PC-9 (cell line): ENCODE measurements at regions of chr2 and their contacts with region 1.

Region 1: GRCh38 chr2:100799686-100800085 is 20.3 kb upstream of the NPAS2 start:
- DNase-seq: no peak
- H3K4me3 ChIP-seq: no peak overlapping the region
- H3K27ac ChIP-seq: no peak overlapping the region
- H3K4me1 ChIP-seq: peaks cover 34% of the 10 kb centered on the region
- H3K27me3 ChIP-seq: no peaks in the 10 kb centered on the region
- CTCF ChIP-seq: no peak

Region 2: GRCh38 chr2:100752628-100753333 is 46.9 kb before region 1 on chr2:
- CTCF ChIA-PET with region 1: no interaction called
- POLR2A ChIA-PET with region 1: interaction called, 12 read pairs
- intact Hi-C with region 1: no loop called
- DNase-seq: peak in 1 of 2 experiments; percentile 92
- H3K4me3 ChIP-seq: no peak overlapping the region
- H3K27ac ChIP-seq: peak overlapping the region; percentile 72
- H3K4me1 ChIP-seq: peaks cover 53% of the 10 kb centered on the region
- H3K27me3 ChIP-seq: no peaks in the 10 kb centered on the region
- CTCF ChIP-seq: no peak

Region 3: DNA sequence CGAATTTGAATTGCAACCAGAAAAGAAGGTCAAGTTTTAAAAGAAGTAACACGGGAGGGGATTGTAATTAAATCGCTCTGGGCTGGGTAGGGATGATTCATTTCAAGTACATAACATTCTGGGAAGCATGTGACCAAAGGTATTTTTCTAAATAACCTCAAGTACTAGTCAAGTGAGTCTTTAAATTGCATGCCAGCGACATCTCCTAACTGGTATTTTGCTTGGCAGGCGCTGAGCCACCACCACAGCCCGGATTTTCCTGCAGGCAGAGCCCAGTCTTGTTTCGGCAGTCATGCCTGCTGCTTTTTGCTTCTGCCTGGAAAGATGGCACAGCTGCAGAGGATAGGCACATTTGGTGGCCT is 13.4 kb before region 1 on chr2:
- CTCF ChIA-PET with region 1: no interaction called
- POLR2A ChIA-PET with region 1: no interaction called
- intact Hi-C with region 1: loop called (anchors 1 kb)
- DNase-seq: peak; percentile 75 to 96
- H3K4me3 ChIP-seq: peak overlapping the region; percentile 33; the same call in 1 of the 2 replicates
- H3K27ac ChIP-seq: peak overlapping the region; percentile 77
- H3K4me1 ChIP-seq: peaks cover 63% of the 10 kb centered on the region
- H3K27me3 ChIP-seq: no peaks in the 10 kb centered on the region
- CTCF ChIP-seq: no peak

Region 4: GRCh38 chr2:101089419-101089818 is 289.7 kb after region 1 on chr2:
- CTCF ChIA-PET with region 1: no interaction called
- POLR2A ChIA-PET with region 1: no interaction called
- intact Hi-C with region 1: no loop called
- DNase-seq: no peak
- H3K4me3 ChIP-seq: no peak overlapping the region
- H3K27ac ChIP-seq: no peak overlapping the region
- H3K4me1 ChIP-seq: no peaks in the 10 kb centered on the region
- H3K27me3 ChIP-seq: no peaks in the 10 kb centered on the region
- CTCF ChIP-seq: no peak